Dorsolateral prefrontal cortex (tissue), 120 donors: ENCODE measurements at regions of chr14 and their contacts with region 1.

Region 1: GRCh38 chr14:57189070-57189469 is 79.6 kb downstream of the EXOC5 start:
- DNase-seq: peak in 1 of 10 donors; percentile 17
- H3K4me3 ChIP-seq: peak overlapping the region in 8 of 59 donors; percentile 2 to 27 (median 14)
- H3K27ac ChIP-seq: no peak overlapping the region
- H3K27me3 ChIP-seq: peaks cover 0 to 10% (median 0%) of the 10 kb centered on the region in 45 donors
- CTCF ChIP-seq: peak in 50 of 56 donors; percentile 17 to 68 (median 43)

Region 2: DNA sequence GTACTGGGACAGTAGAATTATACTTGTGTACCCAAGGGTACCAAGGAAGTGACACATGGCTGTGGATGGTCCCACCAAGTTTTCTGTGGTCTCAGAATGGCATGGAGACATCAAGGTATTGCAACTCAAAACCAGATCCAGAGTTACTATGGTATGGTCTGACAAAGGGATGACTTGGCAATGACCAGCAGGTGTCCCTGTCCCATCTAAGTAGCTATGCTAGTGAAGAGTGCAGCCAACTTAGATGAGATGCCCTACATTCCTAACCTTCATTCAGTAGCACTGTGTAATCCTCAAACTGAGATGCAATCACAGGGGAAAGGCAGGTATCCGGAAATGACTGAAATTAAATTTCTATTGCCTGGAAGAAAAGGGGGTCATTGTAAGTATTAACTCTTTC is 798.2 kb before region 1 on chr14:
- intact Hi-C with region 1: no loop called
- DNase-seq: no peak
- H3K4me3 ChIP-seq: no peak overlapping the region
- H3K27ac ChIP-seq: no peak overlapping the region
- H3K27me3 ChIP-seq: no peaks in the 10 kb centered on the region
- CTCF ChIP-seq: no peak

Region 3: GRCh38 chr14:56491299-56492285 is 697.5 kb before region 1 on chr14:
- intact Hi-C with region 1: loop called in 1 of 2 experiments (anchors 5 kb)
- DNase-seq: peak in 4 of 10 donors; percentile 11 to 54 (median 38)
- H3K4me3 ChIP-seq: peak overlapping the region in 9 of 59 donors; percentile 2 to 34 (median 19)
- H3K27ac ChIP-seq: no peak overlapping the region
- H3K27me3 ChIP-seq: no peaks in the 10 kb centered on the region
- CTCF ChIP-seq: peak; percentile 33 to 83 (median 75)

Region 4: GRCh38 chr14:58145936-58146335 is 956.9 kb after region 1 on chr14:
- intact Hi-C with region 1: no loop called
- DNase-seq: no peak
- H3K4me3 ChIP-seq: no peak overlapping the region
- H3K27ac ChIP-seq: no peak overlapping the region
- H3K27me3 ChIP-seq: no peaks in the 10 kb centered on the region
- CTCF ChIP-seq: no peak